H1 (cell line): ENCODE measurements at regions of chr9 and their contacts with region 1.

Region 1: DNA sequence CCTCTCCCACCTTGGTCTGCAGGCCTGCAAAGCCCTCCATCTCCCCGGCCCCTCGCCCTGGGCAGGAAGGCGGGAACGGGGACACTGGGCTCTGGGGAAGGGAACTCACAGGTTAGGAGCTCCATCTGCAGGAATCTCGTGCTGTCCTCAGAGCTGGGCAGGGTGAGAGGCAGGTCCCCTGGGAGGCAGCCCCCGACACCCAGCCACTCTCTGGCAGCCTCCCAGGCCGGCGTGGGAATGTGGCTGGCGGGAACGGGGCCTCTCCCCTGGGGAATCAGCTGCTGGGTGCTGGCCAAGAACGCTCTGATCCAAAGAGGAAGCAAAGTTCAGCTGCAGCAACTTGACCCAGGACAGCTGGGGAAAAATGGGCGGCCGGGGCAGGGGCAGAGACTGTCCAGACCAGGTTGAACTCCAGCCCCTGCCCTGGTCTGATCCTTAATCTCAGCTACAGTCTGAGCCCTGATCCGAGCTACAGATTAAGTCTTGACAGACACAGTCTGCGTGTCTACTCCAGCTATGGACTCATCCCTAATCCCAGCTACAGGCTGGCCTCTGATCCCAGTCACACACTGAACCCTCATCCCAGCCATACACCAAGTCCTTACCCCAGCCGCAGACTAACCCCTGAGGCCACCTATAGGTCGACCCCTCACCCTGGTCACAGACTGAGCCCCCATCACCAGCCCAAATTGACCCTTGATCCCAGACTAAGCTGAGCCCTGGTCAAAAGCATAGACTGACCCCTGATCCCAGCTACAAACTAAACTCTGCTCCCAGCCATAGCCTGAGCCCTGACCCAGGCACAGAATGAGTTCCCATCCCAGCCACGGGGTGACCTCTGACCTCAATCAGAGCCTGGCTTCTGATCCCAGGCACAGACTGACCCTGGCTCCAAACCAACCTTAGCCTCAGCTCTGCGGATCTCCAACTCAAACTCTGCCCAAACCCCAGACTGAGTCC is 37.3 kb upstream of the EGFL7 start:
- DNase-seq: peak in 1 of 2 experiments; percentile 57
- H3K4me3 ChIP-seq: no peak overlapping the region
- H3K27ac ChIP-seq: no peak overlapping the region
- H3K4me1 ChIP-seq: peaks cover 0 to 5% (median 0%) of the 10 kb centered on the region in 4 experiments; a peak in 2 of 7 replicates
- H3K27me3 ChIP-seq: no peaks in the 10 kb centered on the region
- CTCF ChIP-seq: peak in 2 of 3 experiments; percentile 49 to 69; a peak in 3 of 4 replicates
- EP300 ChIP-seq: no peak
- POLR2A ChIP-seq: no peak
- RAD21 ChIP-seq: peak; percentile 78 to 85

Region 2: DNA sequence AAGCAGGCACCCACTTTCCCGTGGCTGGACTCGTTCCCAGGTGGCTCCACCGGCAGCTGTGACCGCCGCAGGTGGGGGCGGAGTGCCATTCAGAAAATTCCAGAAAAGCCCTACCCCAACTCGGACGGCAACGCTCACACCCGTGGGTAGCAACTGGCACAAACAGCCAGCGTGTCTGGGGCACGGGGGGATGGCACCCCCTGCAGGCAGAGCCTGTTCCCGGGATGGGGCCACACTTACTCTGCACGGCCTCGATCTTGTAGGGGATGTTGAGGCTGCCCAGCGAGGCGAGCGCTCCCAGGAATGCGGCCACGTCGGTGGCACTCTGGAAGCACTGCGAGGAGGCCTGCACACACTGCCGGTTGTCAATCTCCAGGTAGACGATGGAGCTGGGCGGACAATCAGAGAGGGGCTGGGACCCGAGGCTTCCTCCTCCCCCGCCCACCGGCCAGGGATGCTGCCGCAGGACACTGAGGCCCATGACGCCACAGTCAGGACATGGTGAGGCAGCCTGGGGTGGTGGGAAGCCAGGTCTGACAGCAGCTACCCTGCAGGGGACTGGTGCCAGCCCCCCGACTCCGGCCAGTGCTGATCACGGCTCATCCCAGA is 122.3 kb before region 1 on chr9:
- CTCF ChIA-PET with region 1: interaction called, 11 read pairs
- POLR2A ChIA-PET with region 1: interaction called, 3 read pairs
- DNase-seq: no peak
- H3K4me3 ChIP-seq: no peak overlapping the region
- H3K27ac ChIP-seq: no peak overlapping the region
- H3K4me1 ChIP-seq: no peaks in the 10 kb centered on the region
- H3K27me3 ChIP-seq: no peaks in the 10 kb centered on the region
- CTCF ChIP-seq: peak in 1 of 3 experiments; percentile 22; a peak in 1 of 4 replicates
- EP300 ChIP-seq: no peak
- POLR2A ChIP-seq: no peak
- RAD21 ChIP-seq: peak in 1 of 2 experiments; percentile 8; a peak in 1 of 4 replicates

Region 3: GRCh38 chr9:136521537-136521936 is 103.8 kb before region 1 on chr9:
- CTCF ChIA-PET with region 1: interaction called, 53 read pairs
- POLR2A ChIA-PET with region 1: no interaction called
- DNase-seq: no peak
- H3K4me3 ChIP-seq: no peak overlapping the region
- H3K27ac ChIP-seq: no peak overlapping the region
- H3K4me1 ChIP-seq: peaks cover 0 to 4% (median 3%) of the 10 kb centered on the region in 4 experiments; a peak in 3 of 7 replicates
- H3K27me3 ChIP-seq: no peaks in the 10 kb centered on the region
- CTCF ChIP-seq: no peak
- EP300 ChIP-seq: no peak
- POLR2A ChIP-seq: no peak
- RAD21 ChIP-seq: no peak

Region 4: GRCh38 chr9:136527721-136528691 is 97.4 kb before region 1 on chr9:
- CTCF ChIA-PET with region 1: interaction called, 53 read pairs
- POLR2A ChIA-PET with region 1: no interaction called
- DNase-seq: no peak
- H3K4me3 ChIP-seq: no peak overlapping the region
- H3K27ac ChIP-seq: no peak overlapping the region
- H3K4me1 ChIP-seq: peaks cover 0 to 24% (median 14%) of the 10 kb centered on the region in 4 experiments; a peak in 5 of 7 replicates
- H3K27me3 ChIP-seq: no peaks in the 10 kb centered on the region
- CTCF ChIP-seq: no peak
- EP300 ChIP-seq: no peak
- POLR2A ChIP-seq: no peak
- RAD21 ChIP-seq: no peak

Region 5: GRCh38 chr9:136532799-136533774 is 92.3 kb before region 1 on chr9:
- CTCF ChIA-PET with region 1: interaction called, 72 read pairs
- POLR2A ChIA-PET with region 1: interaction called, 3 read pairs
- DNase-seq: no peak
- H3K4me3 ChIP-seq: no peak overlapping the region
- H3K27ac ChIP-seq: no peak overlapping the region
- H3K4me1 ChIP-seq: peaks cover 0 to 18% (median 10%) of the 10 kb centered on the region in 4 experiments; a peak in 4 of 7 replicates
- H3K27me3 ChIP-seq: no peaks in the 10 kb centered on the region
- CTCF ChIP-seq: no peak
- EP300 ChIP-seq: no peak
- POLR2A ChIP-seq: no peak
- RAD21 ChIP-seq: no peak

Region 6: GRCh38 chr9:136605988-136606660 is 19.3 kb before region 1 on chr9:
- CTCF ChIA-PET with region 1: interaction called, 24 read pairs
- POLR2A ChIA-PET with region 1: interaction called, 6 read pairs
- DNase-seq: no peak
- H3K4me3 ChIP-seq: no peak overlapping the region
- H3K27ac ChIP-seq: no peak overlapping the region
- H3K4me1 ChIP-seq: peaks cover 0 to 32% (median 15%) of the 10 kb centered on the region in 4 experiments; a peak in 5 of 7 replicates
- H3K27me3 ChIP-seq: 0 out of 7 replicates have a peak, but pooled peaks cover 0 to 2% (median 0%) of the 10 kb centered on the region in 4 experiments
- CTCF ChIP-seq: no peak
- EP300 ChIP-seq: no peak
- POLR2A ChIP-seq: no peak
- RAD21 ChIP-seq: no peak

Region 7: DNA sequence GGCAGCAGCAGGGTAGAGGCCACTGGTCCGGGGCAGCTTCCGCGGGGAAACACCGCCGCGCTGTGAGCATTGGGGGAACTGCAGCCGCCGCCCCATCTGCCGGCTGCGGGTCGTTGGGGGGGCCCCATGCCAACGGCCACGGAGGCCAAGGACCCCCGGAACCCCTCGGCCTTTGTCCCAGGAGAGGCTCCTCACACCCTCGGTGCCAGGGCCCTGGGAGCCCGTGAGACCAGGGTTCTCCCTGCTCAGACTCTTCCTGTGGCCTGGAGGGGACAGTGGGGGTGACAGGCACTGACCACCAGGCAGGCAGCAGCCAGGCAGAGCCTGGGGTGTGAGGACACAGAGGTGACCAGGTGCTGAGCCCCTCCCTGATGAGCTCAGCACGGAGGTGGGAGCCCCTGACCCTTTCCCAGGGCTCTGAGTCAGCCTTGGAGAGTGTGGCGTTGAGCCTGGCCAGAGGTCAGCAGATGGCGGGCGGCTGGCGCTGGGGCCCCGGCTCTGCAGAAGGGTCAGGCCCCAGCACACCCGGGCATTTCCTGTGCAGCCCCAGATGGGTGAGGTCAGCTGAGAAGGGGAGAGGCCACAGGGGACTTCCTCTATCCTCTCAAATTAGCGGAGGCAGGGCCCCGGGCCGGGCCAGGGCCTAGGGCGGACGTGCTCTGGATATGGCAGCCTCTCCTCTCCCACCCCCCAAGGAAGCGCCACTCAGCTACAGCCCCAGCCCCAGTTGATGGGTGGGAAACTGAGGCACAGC is 19.4 kb after region 1 on chr9:
- CTCF ChIA-PET with region 1: interaction called, 23 read pairs
- POLR2A ChIA-PET with region 1: interaction called, 3 read pairs
- DNase-seq: peak in 1 of 2 experiments; percentile 93
- H3K4me3 ChIP-seq: peak overlapping the region in 2 of 4 experiments; percentile 10 to 45; a peak in 1 of 8 replicates
- H3K27ac ChIP-seq: no peak overlapping the region
- H3K4me1 ChIP-seq: peaks cover 0 to 10% (median 3%) of the 10 kb centered on the region in 4 experiments; a peak in 4 of 7 replicates
- H3K27me3 ChIP-seq: peaks cover 0 to 6% (median 0%) of the 10 kb centered on the region in 4 experiments; a peak in 1 of 7 replicates
- CTCF ChIP-seq: peak; percentile 82 to 95 (median 88)
- EP300 ChIP-seq: no peak
- POLR2A ChIP-seq: no peak
- RAD21 ChIP-seq: peak; percentile 84 to 89

Region 8: DNA sequence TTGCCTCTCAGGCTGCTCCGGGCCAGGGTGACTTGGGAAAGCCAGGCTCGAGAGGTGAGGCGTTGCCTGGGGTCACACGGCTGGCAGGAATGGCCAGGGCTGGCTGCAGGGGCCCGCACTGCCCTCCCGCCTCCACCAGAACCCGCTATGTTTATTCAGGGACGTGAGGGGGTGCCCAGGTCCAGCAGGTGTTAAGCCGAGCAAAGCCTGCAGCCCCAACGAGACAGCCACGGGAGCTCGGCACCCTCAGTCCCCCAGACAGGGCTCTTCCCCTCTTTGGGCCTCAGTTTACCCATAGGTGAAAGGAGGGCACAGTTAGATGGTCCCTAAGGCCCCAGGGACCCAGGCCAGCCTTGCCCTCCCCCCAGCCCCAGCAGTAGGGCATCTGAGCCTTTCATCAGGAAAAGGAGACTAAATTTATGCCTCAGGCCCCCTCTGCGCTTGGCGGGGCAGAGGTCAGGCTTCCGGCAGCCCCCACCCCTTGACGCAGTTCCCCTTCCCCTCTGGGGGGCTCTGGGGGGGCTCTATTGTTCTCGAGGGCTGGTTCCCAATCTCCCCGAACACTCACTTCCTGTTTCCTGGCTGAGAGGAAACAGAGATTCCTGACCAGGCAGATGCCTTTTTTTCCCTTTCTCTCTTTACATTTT is 30.3 kb after region 1 on chr9:
- CTCF ChIA-PET with region 1: no interaction called
- POLR2A ChIA-PET with region 1: no interaction called
- DNase-seq: no peak
- H3K4me3 ChIP-seq: no peak overlapping the region
- H3K27ac ChIP-seq: no peak overlapping the region
- H3K4me1 ChIP-seq: no peaks in the 10 kb centered on the region
- H3K27me3 ChIP-seq: no peaks in the 10 kb centered on the region; a peak in 1 of 7 replicates
- CTCF ChIP-seq: no peak
- EP300 ChIP-seq: no peak
- POLR2A ChIP-seq: no peak
- RAD21 ChIP-seq: no peak

Region 9: DNA sequence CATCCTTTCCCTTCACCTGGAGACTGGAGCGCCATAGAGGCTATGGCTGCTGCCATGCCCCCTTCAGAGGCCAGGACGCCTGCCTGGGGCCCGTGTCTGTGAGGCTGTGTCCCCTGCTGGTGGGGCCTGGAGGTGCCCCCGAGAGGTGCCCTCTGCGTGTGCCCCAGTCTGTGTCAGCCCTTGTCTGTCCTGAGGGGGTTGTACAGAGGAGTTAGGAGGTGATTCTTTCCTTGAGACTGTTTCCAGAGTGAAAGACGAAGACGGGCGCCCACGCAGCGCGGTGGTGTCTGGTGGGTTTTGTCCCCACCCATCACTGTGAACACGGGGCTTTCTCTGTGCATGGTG is 285.5 kb after region 1 on chr9:
- CTCF ChIA-PET with region 1: no interaction called
- POLR2A ChIA-PET with region 1: no interaction called
- DNase-seq: no peak
- H3K4me3 ChIP-seq: no peak overlapping the region
- H3K27ac ChIP-seq: no peak overlapping the region
- H3K4me1 ChIP-seq: no peaks in the 10 kb centered on the region
- H3K27me3 ChIP-seq: no peaks in the 10 kb centered on the region
- CTCF ChIP-seq: peak in 2 of 3 experiments; percentile 15 to 30; a peak in 2 of 4 replicates
- EP300 ChIP-seq: no peak
- POLR2A ChIP-seq: no peak
- RAD21 ChIP-seq: no peak